ENCODE measurements at regions of chr4 and their contacts with region 1.

Region 1: GRCh38 chr4:16026160-16026761 is 57.6 kb downstream of the PROM1 start:
- ATAC-seq: peak in 1 of 8 experiments; percentile 25
- H3K4me3 ChIP-seq: no peak overlapping the region
- H3K27ac ChIP-seq: no peak overlapping the region
- H3K4me1 ChIP-seq: peaks cover 2 to 11% of the 10 kb centered on the region in 2 donors

Region 2: GRCh38 chr4:15938182-15938581 is 88.1 kb before region 1 on chr4:
- in situ Hi-C with region 1: no loop called
- ATAC-seq: peak in 2 of 8 experiments; percentile 40 to 43
- H3K4me3 ChIP-seq: no peak overlapping the region
- H3K27ac ChIP-seq: no peak overlapping the region
- H3K4me1 ChIP-seq: no peaks in the 10 kb centered on the region

Region 3: DNA sequence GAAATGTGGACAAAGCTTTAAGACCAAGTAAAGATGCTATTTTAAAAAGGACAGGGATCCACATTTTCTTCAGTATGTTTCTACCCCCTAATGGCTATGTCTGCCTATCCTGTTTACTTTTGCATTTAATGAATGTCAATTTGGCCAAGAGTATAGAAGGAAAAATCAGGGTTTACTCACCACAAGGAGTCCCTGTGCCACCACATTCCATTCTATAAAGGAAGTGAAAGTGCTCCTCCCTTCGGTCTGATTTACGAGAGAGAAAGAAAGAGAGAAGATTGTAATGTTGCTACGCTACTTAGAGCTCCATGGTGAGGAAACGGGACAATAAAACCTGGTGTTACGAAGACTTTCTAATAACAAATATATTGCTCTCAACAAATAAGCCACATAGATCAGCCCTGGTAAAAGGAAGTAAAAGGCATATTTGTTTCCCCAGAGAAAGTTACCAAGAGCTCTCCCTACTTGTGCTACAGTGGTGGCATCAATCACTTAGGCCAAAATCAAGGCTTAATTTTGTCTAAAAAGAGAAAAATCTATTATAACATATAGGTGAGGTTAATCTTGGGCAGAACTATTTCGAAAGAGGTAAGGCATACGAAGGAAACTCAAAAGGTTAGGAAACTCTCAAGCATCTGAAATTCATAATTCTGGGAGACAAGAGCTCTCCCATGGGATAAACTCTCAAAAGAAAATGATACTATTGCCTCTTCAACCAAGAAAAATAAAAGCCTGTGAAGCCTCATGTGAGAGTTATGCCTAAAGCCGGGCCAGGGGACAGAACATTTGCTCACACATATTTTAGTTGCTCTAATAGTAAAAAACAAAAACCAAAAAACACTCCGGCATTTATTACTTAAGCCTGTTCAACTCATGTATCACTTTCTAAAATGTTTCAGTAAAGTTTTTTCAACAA is 170.5 kb after region 1 on chr4:
- in situ Hi-C with region 1: loop called in 7 of 9 experiments (anchors 10 to 25 kb)
- ATAC-seq: peak; percentile 44 to 99 (median 84)
- H3K4me3 ChIP-seq: no peak overlapping the region
- H3K27ac ChIP-seq: peak overlapping the region; percentile 25 to 54
- H3K4me1 ChIP-seq: peaks cover 17 to 24% of the 10 kb centered on the region in 2 donors

Region 4: DNA sequence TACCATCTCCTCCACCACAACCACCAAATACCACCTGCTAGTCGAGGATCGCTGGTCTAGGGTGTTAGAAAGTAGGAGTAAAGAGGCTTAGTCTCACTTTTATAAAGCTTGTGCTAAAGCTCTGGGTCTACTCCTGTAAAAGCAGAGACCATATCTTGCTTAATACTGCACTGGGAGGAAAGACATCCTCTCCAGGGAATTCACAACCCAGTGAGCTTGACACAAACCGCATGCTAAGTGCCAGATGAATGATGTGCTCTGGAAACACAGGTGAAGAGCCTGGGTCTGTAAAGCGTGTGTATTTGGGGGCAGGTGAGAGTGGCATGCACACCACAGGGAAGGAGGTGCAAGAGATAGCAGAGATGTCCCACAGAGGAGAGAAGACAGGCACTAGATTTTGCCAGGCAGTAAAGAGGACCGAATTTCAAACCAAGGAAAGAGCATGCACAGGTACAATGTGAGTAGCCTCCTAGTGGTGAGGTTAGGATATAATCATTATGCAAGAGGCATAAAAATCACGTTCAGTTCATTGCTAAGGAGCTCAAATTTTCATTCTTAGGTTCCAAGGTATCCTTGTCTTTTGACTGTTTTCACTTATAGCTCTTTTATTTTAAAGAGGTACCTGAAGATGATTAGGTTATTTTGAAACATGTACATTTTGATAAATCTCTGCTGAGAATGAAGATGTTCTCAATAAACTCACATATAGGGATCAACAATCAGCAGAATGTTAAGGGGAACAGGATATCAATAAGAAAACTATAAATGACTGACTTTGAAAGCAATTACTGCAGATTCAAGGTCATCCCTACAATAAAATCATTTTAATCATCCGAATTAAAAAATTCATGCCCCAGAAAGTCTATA is 179.3 kb after region 1 on chr4:
- in situ Hi-C with region 1: loop called in 5 of 9 experiments (anchors 25 kb)
- ATAC-seq: peak in 4 of 8 experiments; percentile 30 to 59 (median 36)
- H3K4me3 ChIP-seq: no peak overlapping the region
- H3K27ac ChIP-seq: no peak overlapping the region
- H3K4me1 ChIP-seq: no peaks in the 10 kb centered on the region

Region 5: GRCh38 chr4:16264798-16265197 is 238.5 kb after region 1 on chr4:
- in situ Hi-C with region 1: loop called in 5 of 9 experiments (anchors 5 to 25 kb)
- ATAC-seq: peak in 6 of 8 experiments; percentile 46 to 84 (median 62)
- H3K4me3 ChIP-seq: no peak overlapping the region
- H3K27ac ChIP-seq: no peak overlapping the region
- H3K4me1 ChIP-seq: no peaks in the 10 kb centered on the region

Region 6: GRCh38 chr4:17468371-17469221 is 1442.3 kb after region 1 on chr4:
- in situ Hi-C with region 1: loop called in 1 of 9 experiments (anchors 25 kb)
- ATAC-seq: no peak
- H3K4me3 ChIP-seq: no peak overlapping the region
- H3K27ac ChIP-seq: no peak overlapping the region
- H3K4me1 ChIP-seq: peaks cover 0 to 3% of the 10 kb centered on the region in 2 donors

Measured in motor neuron (in vitro differentiated cells).